PC-9 (cell line): ENCODE measurements at regions of chr11 and their contacts with region 1.

Region 1: GRCh38 chr11:5204787-5205186 is 4.3 kb upstream of the OR51V1 start:
- DNase-seq: peak in 1 of 2 experiments; percentile 1
- H3K4me3 ChIP-seq: no peak overlapping the region
- H3K27ac ChIP-seq: no peak overlapping the region
- H3K4me1 ChIP-seq: no peaks in the 10 kb centered on the region
- H3K27me3 ChIP-seq: no peaks in the 10 kb centered on the region
- CTCF ChIP-seq: peak; percentile 66

Region 2: GRCh38 chr11:4658629-4659445 is 546.0 kb before region 1 on chr11:
- CTCF ChIA-PET with region 1: no interaction called
- POLR2A ChIA-PET with region 1: no interaction called
- intact Hi-C with region 1: no loop called
- DNase-seq: no peak
- H3K4me3 ChIP-seq: no peak overlapping the region
- H3K27ac ChIP-seq: no peak overlapping the region
- H3K4me1 ChIP-seq: no peaks in the 10 kb centered on the region
- H3K27me3 ChIP-seq: peaks cover 8% of the 10 kb centered on the region; the same call in 1 of the 2 replicates
- CTCF ChIP-seq: no peak

Region 3: GRCh38 chr11:5291207-5291838 is 86.5 kb after region 1 on chr11:
- CTCF ChIA-PET with region 1: no interaction called
- POLR2A ChIA-PET with region 1: no interaction called
- intact Hi-C with region 1: loop called (anchors 1 kb)
- DNase-seq: no peak
- H3K4me3 ChIP-seq: no peak overlapping the region
- H3K27ac ChIP-seq: no peak overlapping the region
- H3K4me1 ChIP-seq: no peaks in the 10 kb centered on the region
- H3K27me3 ChIP-seq: no peaks in the 10 kb centered on the region
- CTCF ChIP-seq: peak; percentile 58

Region 4: GRCh38 chr11:5380740-5381342 is 176.1 kb after region 1 on chr11:
- CTCF ChIA-PET with region 1: no interaction called
- POLR2A ChIA-PET with region 1: no interaction called
- intact Hi-C with region 1: loop called (anchors 1 kb)
- DNase-seq: peak in 1 of 2 experiments; percentile 23
- H3K4me3 ChIP-seq: no peak overlapping the region
- H3K27ac ChIP-seq: no peak overlapping the region
- H3K4me1 ChIP-seq: no peaks in the 10 kb centered on the region
- H3K27me3 ChIP-seq: no peaks in the 10 kb centered on the region
- CTCF ChIP-seq: peak; percentile 75

Region 5: DNA sequence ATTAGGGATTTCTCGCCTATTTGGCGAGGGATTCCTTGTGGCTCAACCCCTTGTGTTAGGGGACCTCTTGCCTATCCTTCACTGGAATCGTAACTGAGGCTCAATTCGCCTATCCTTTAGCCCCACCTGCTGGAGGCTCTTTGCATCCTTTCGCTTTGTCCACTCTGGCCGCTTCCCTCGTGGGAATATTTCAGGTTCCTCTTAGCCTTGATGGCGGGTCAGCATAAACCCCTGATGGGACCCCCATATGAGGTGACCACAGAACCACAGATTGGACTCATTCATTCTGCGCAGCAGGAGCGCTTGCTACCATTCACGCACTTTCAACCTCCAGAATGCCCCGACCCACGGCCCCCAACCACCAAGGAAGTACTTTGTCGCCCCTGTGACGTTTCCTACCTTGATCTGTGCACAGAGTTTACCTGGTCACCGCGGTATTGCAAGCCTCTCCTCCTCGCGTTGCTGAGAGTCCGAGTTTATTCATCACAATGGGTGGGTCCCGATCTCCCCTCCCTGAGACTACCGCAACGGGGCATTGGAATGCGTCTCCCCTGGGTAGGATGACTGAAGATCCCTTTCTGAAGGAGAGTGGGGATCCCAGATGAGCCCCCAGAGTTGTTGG is 603.8 kb after region 1 on chr11 and contains the start of gene OR52N2:
- CTCF ChIA-PET with region 1: no interaction called
- POLR2A ChIA-PET with region 1: no interaction called
- intact Hi-C with region 1: loop called (anchors 2 kb)
- DNase-seq: peak; percentile 35 to 37
- H3K4me3 ChIP-seq: peak within 1 kb of the TSS; percentile 35; the same call in 1 of the 2 replicates
- H3K27ac ChIP-seq: no peak within 1 kb of the TSS
- H3K4me1 ChIP-seq: no peaks in the 10 kb centered on the region
- H3K27me3 ChIP-seq: no peaks in the 10 kb centered on the region
- CTCF ChIP-seq: peak; percentile 78
- total RNA-seq, gene OR52N2: not detected in 2 replicates